ENCODE measurements at regions of chr20 and their contacts with region 1.

Region 1: DNA sequence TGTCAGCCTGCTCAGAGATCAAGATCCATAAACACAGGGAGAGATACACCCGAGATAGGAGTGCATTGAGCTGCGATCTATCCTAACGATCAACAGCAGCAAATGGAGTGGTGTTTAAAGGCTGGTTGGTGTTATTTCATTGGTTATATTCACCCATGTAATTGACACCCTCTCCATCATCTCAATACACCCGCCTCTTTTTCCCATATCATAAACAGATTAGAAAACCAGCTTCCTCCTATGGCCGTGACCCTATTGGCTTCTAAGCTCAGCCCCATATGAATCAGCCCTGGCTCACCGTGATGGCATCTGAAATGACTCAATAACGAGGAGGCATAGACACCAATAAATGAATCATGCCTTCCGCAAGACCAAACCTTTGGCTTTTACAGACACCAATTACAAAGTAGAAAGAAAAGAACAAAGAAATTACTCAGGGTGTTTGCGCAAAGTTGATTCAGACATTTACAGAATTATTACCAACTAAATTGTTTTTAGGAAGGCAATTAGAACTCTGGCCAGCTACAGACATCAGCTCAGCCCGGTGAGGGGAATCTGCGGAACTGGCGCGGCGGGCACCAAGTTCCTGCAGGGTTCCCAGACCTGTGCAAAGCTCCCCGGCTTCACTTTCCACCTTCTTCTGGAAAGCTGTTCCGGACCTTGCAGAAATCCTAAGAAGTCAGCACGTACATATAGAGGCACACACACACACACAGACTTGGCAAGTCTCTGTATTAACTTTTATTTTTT is 11.5 kb downstream of the PMEPA1 start:
- DNase-seq: peak; percentile 100
- ATAC-seq: peak; percentile 73
- H3K4me3 ChIP-seq: peak overlapping the region; percentile 50
- H3K27ac ChIP-seq: peak overlapping the region; percentile 94
- H3K4me1 ChIP-seq: peaks cover 90% of the 10 kb centered on the region
- H3K27me3 ChIP-seq: no peaks in the 10 kb centered on the region
- CTCF ChIP-seq: no peak

Region 2: DNA sequence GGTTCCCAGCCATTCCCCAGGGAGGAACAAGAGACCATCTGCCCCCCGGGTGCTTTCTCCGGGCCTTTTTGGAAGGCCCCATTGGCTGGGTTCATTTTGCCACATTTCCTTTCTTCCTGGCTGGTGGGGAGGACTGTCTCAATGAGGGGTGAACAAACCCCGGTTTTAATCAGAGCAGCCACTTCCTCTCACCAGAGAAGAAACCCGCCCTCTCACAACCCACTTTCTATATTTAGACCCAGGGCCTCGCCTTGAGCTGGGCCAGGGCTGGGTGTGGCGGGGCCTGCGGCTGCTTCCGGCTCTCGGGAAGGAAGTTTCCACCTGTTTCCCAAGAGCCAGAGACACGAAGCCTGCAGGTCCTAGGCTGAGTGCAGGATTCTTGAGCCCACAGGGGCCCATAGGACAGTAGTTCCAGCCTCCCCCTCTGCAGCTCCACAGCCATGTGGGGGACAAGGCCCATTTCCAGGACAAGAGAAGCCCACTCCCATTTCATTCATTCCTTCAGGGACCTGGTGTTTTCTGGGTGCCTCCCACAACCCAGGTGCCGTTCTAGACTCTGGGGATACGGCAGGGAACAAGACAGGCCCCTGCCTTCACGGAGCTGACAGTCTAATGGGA is 265.3 kb before region 1 on chr20:
- CTCF ChIA-PET with region 1: no interaction called
- POLR2A ChIA-PET with region 1: no interaction called
- intact Hi-C with region 1: no loop called
- DNase-seq: peak; percentile 56
- ATAC-seq: peak; percentile 15; the same call in 1 of the 2 replicates
- H3K4me3 ChIP-seq: no peak overlapping the region
- H3K27ac ChIP-seq: peak overlapping the region; percentile 40
- H3K4me1 ChIP-seq: peaks cover 28% of the 10 kb centered on the region
- H3K27me3 ChIP-seq: no peaks in the 10 kb centered on the region
- CTCF ChIP-seq: no peak

Region 3: GRCh38 chr20:57622579-57623377 is 75.5 kb before region 1 on chr20:
- CTCF ChIA-PET with region 1: interaction called, 5 read pairs
- POLR2A ChIA-PET with region 1: no interaction called
- intact Hi-C with region 1: loop called (anchors 5 kb)
- DNase-seq: peak; percentile 99
- ATAC-seq: peak; percentile 67
- H3K4me3 ChIP-seq: 0 out of 2 replicates have a peak overlapping the region, but pooled peaks have one; percentile 5
- H3K27ac ChIP-seq: peak overlapping the region; percentile 35
- H3K4me1 ChIP-seq: peaks cover 50% of the 10 kb centered on the region
- H3K27me3 ChIP-seq: no peaks in the 10 kb centered on the region
- CTCF ChIP-seq: peak; percentile 99

Region 4: DNA sequence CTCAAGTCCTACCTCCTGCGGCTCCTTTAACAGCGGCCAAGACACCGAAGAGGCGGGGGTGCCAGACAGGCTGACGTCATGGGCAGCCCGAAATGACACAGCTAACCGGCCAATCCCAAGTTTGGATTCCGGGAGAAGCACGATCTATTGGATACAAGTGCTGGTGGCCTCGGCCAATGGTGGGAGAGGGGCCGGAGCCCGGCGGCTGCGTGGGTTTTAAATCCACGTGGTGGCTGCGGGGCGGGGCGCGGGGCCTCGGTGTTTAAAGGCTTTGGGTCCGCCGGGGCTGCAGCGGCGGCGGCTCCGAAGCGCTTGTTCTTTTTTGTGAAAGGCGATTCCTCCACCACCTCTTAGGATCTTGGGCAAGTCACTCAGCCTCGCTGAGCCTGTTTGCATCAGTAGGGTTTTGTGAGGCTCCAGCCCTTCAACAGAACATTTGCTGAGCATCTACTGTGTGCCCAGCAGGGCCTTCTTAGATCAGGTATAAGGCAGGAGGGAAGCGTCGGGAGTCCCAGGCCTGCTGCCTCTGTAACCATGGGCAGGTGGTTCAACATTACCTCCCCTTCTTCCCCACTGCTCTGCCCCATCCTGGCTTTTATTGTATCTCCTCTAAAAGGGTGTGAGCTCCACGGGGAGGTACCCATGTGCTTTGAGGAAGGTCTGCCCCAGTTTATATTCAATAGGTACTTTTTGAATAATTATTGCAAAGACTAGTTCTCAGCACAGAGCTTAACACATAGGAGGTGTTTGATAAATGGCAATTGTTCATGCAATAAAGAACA is 20.4 kb after region 1 on chr20:
- CTCF ChIA-PET with region 1: interaction called, 5 read pairs
- POLR2A ChIA-PET with region 1: interaction called, 5 read pairs
- intact Hi-C with region 1: loop called (anchors 1 kb)
- DNase-seq: peak; percentile 100
- ATAC-seq: peak; percentile 88
- H3K4me3 ChIP-seq: peak overlapping the region; percentile 63
- H3K27ac ChIP-seq: peak overlapping the region; percentile 72
- H3K4me1 ChIP-seq: peaks cover 49% of the 10 kb centered on the region
- H3K27me3 ChIP-seq: no peaks in the 10 kb centered on the region
- CTCF ChIP-seq: no peak

Region 5: DNA sequence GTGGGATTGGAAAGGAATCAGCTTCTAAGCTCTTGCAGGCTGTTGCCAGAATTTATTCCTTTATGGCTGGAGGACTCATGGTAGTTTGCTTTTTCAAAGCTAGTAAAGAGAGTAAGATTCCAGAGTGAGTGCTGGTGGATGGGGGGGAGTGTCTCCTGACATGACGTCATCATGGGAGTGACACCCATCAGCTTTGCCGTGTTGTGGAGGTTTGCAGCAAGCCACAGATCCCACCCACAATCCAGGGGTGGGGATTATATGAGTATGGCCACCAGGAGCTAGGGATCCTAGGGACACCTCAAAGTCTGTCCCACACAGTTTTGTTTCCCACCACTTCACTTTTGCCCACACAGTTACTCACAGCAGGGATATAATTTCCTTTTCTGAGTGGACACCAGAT is 40.2 kb after region 1 on chr20:
- CTCF ChIA-PET with region 1: no interaction called
- POLR2A ChIA-PET with region 1: no interaction called
- intact Hi-C with region 1: no loop called
- DNase-seq: peak; percentile 26
- ATAC-seq: peak; percentile 59
- H3K4me3 ChIP-seq: no peak overlapping the region
- H3K27ac ChIP-seq: no peak overlapping the region
- H3K4me1 ChIP-seq: peaks cover 7% of the 10 kb centered on the region
- H3K27me3 ChIP-seq: no peaks in the 10 kb centered on the region
- CTCF ChIP-seq: no peak

Region 6: GRCh38 chr20:57818418-57819181 is 120.3 kb after region 1 on chr20:
- CTCF ChIA-PET with region 1: no interaction called
- POLR2A ChIA-PET with region 1: no interaction called
- intact Hi-C with region 1: no loop called
- DNase-seq: no peak
- ATAC-seq: no peak
- H3K4me3 ChIP-seq: no peak overlapping the region
- H3K27ac ChIP-seq: no peak overlapping the region
- H3K4me1 ChIP-seq: no peaks in the 10 kb centered on the region
- H3K27me3 ChIP-seq: 0 out of 2 replicates have a peak, but pooled peaks cover 6% of the 10 kb centered on the region
- CTCF ChIP-seq: no peak

Region 7: GRCh38 chr20:57991211-57991881 is 293.1 kb after region 1 on chr20:
- CTCF ChIA-PET with region 1: no interaction called
- POLR2A ChIA-PET with region 1: no interaction called
- intact Hi-C with region 1: loop called (anchors 5 kb)
- DNase-seq: peak; percentile 97
- ATAC-seq: peak; percentile 84
- H3K4me3 ChIP-seq: no peak overlapping the region
- H3K27ac ChIP-seq: peak overlapping the region; percentile 95
- H3K4me1 ChIP-seq: peaks cover 66% of the 10 kb centered on the region
- H3K27me3 ChIP-seq: no peaks in the 10 kb centered on the region
- CTCF ChIP-seq: no peak

Region 8: DNA sequence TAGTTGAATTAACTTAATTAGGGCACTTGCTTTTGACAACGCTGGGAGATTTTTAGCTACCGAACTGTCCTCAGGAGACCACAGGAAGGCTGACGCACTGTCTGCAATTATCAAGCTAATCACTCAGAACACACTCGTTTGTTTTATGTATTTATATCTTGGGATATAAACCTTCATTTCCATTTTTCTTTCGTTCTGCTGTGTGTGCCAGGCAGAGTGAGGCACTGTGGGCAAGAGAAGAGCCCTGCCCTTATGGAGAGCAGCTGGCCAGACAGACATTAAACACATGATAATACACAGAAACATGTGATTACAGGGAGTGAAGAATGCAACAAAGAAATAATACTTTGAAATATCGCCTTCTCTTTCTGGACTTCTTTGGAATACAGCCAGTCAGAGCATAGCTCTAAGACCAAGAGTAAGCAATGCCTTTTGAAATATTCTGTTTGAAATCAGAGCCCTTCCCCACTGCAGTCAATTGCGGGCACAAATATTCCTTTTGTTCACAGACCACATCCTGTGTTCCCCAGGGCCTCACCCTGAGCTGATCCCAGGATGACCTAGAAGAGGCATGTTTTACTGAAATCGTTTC is 433.4 kb after region 1 on chr20:
- CTCF ChIA-PET with region 1: no interaction called
- POLR2A ChIA-PET with region 1: no interaction called
- intact Hi-C with region 1: loop called (anchors 5 kb)
- DNase-seq: peak; percentile 98
- ATAC-seq: peak; percentile 49
- H3K4me3 ChIP-seq: peak overlapping the region; percentile 43
- H3K27ac ChIP-seq: peak overlapping the region; percentile 74
- H3K4me1 ChIP-seq: peaks cover 65% of the 10 kb centered on the region
- H3K27me3 ChIP-seq: no peaks in the 10 kb centered on the region
- CTCF ChIP-seq: no peak

Measured in PC-3 (cell line).